T-cell (primary cell): ENCODE measurements at regions of chr2 and their contacts with region 1.

Region 1: DNA sequence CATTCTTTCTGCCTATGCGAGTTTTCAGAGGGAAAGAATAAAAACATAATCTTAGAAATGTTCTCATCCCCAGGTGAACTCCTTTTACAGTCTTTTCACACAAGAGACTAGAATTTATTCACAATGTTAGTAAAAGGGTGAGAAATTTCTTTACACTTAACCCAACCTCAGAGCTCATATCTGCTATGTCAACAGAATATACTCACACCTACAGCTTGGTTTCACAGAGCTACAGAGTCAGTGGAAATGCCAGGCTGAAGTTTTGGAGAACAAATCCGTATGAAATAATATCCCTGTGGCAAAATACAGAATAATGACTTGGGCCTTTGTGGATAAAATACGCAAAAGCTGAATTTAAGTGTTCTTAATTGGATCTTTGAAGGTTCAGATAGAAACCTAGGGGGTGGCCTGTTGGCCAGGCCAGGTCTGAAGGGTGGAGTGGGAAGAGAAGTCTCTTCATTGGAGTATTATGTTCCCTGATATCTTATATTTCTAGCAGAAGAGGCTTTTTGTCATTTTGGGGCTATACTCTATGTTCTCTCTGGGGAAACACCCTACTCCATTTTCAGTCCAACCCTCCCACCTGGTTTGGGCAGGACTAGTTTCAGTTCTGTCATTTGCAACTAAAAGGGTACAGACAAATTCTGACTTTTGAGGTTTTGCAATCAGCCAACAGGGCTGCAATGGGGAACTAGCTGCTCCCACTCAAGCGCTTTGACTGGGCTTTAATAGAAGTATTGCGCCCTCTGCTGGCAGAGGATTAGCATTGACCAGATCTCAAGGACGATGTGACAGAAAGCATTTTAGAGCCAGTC is 25.7 kb downstream of the FBXO48 start:
- DNase-seq: peak; percentile 47 to 95 (median 77)
- ATAC-seq: peak; percentile 92 to 97 (median 95)
- H3K4me3 ChIP-seq: no peak overlapping the region
- H3K4me3 Mint-ChIP-seq: no peak overlapping the region
- H3K27ac ChIP-seq: peak overlapping the region; percentile 67
- H3K27ac Mint-ChIP-seq: peak overlapping the region; percentile 71 to 87
- H3K4me1 ChIP-seq: peaks cover 0 to 12% of the 10 kb centered on the region in 2 experiments
- H3K4me1 Mint-ChIP-seq: peaks cover 0 to 24% (median 8%) of the 10 kb centered on the region in 3 donors
- H3K27me3 ChIP-seq: no peaks in the 10 kb centered on the region
- H3K27me3 Mint-ChIP-seq: no peaks in the 10 kb centered on the region

Region 2: DNA sequence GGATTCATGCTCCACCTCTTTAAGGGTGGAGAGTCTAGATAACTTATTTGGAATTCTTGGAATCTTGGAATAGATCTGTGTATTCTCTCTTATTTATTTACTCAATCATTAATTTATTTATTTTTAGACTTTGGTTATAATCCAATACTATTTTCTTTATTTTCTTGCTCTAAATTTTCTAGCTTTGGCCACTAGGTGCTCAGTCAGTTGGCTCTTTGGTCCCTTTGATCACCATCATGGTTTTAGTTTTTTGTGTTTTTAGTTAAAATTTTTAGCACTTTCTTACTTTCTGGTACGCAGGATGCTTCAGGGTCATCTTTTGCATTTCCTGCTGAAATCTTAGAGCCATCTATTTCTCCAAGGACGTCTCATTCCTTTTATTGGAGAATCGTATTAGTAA is 81.5 kb before region 1 on chr2:
- CTCF ChIA-PET with region 1: interaction called, 3 to 16 read pairs
- POLR2A ChIA-PET with region 1: no interaction called
- DNase-seq: no peak
- ATAC-seq: no peak
- H3K4me3 ChIP-seq: no peak overlapping the region
- H3K4me3 Mint-ChIP-seq: no peak overlapping the region
- H3K27ac ChIP-seq: no peak overlapping the region
- H3K27ac Mint-ChIP-seq: no peak overlapping the region
- H3K4me1 ChIP-seq: peaks cover 0 to 15% of the 10 kb centered on the region in 2 experiments
- H3K4me1 Mint-ChIP-seq: peaks cover 12 to 28% (median 13%) of the 10 kb centered on the region in 3 donors
- H3K27me3 ChIP-seq: no peaks in the 10 kb centered on the region
- H3K27me3 Mint-ChIP-seq: peaks cover 0 to 4% of the 10 kb centered on the region in 2 donors

Region 3: GRCh38 chr2:68411397-68412126 is 29.8 kb before region 1 on chr2:
- CTCF ChIA-PET with region 1: no interaction called
- POLR2A ChIA-PET with region 1: no interaction called
- DNase-seq: no peak
- ATAC-seq: no peak
- H3K4me3 ChIP-seq: no peak overlapping the region
- H3K4me3 Mint-ChIP-seq: peak overlapping the region in 1 of 3 donors; percentile 6
- H3K27ac ChIP-seq: peak overlapping the region; percentile 42
- H3K27ac Mint-ChIP-seq: peak overlapping the region in 1 of 2 donors; percentile 77
- H3K4me1 ChIP-seq: peaks cover 0 to 18% of the 10 kb centered on the region in 2 experiments
- H3K4me1 Mint-ChIP-seq: peaks cover 8 to 42% (median 13%) of the 10 kb centered on the region in 3 donors
- H3K27me3 ChIP-seq: no peaks in the 10 kb centered on the region
- H3K27me3 Mint-ChIP-seq: peaks cover 0 to 3% of the 10 kb centered on the region in 2 donors

Region 4: GRCh38 chr2:68429311-68429826 is 12.0 kb before region 1 on chr2:
- CTCF ChIA-PET with region 1: interaction called in 1 of 2 experiments, 15 read pairs
- POLR2A ChIA-PET with region 1: no interaction called
- DNase-seq: no peak
- ATAC-seq: no peak
- H3K4me3 ChIP-seq: no peak overlapping the region
- H3K4me3 Mint-ChIP-seq: no peak overlapping the region
- H3K27ac ChIP-seq: no peak overlapping the region
- H3K27ac Mint-ChIP-seq: no peak overlapping the region
- H3K4me1 ChIP-seq: peaks cover 0 to 37% of the 10 kb centered on the region in 2 experiments
- H3K4me1 Mint-ChIP-seq: peaks cover 0 to 25% (median 18%) of the 10 kb centered on the region in 3 donors
- H3K27me3 ChIP-seq: no peaks in the 10 kb centered on the region
- H3K27me3 Mint-ChIP-seq: no peaks in the 10 kb centered on the region

Region 5: DNA sequence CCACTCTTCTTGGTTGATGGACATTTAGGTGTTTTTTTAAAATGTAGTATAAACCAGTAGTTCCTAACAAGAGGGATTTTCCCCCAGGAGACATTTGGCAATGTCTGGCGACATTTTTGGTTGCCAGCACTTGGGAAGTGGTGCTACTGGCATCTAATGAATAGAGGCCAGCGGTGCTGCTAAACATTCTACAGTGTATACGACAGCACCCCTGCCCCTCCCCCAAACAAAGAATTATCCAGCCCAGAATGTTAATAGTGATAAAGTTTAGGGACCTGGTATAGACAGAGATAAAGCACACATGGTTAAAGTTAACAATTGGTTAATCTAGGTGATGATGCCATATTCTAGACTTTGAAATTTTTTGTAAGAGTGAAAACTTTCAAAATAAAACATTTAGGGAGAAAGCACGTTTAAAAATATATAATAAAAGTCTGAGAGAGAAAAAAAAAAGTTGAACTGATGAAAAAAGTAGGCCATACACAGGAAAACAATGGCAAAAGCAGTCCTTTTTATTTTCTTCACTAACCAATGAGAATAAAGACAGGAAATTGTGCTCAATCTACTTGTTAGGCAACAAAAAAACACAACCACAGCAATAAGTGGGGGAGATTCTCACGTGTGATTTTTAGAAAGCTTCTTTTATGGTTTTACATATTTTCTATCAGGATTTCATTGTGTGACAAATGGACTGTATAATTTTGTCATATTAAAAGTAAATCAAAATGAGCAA is 10.9 kb after region 1 on chr2:
- CTCF ChIA-PET with region 1: interaction called, 4 to 13 read pairs
- POLR2A ChIA-PET with region 1: no interaction called
- DNase-seq: peak in 1 of 35 experiments; percentile 52
- ATAC-seq: peak in 3 of 4 experiments; percentile 24 to 78 (median 55)
- H3K4me3 ChIP-seq: no peak overlapping the region
- H3K4me3 Mint-ChIP-seq: no peak overlapping the region
- H3K27ac ChIP-seq: peak overlapping the region; percentile 14
- H3K27ac Mint-ChIP-seq: peak overlapping the region; percentile 71 to 72
- H3K4me1 ChIP-seq: peaks cover 0 to 6% of the 10 kb centered on the region in 2 experiments
- H3K4me1 Mint-ChIP-seq: peaks cover 21 to 23% (median 22%) of the 10 kb centered on the region in 3 donors
- H3K27me3 ChIP-seq: no peaks in the 10 kb centered on the region
- H3K27me3 Mint-ChIP-seq: no peaks in the 10 kb centered on the region

Region 6: GRCh38 chr2:69272803-69273471 is 831.6 kb after region 1 on chr2:
- CTCF ChIA-PET with region 1: no interaction called
- POLR2A ChIA-PET with region 1: no interaction called
- DNase-seq: no peak
- ATAC-seq: no peak
- H3K4me3 ChIP-seq: no peak overlapping the region
- H3K4me3 Mint-ChIP-seq: no peak overlapping the region
- H3K27ac ChIP-seq: no peak overlapping the region
- H3K27ac Mint-ChIP-seq: no peak overlapping the region
- H3K4me1 ChIP-seq: no peaks in the 10 kb centered on the region
- H3K4me1 Mint-ChIP-seq: no peaks in the 10 kb centered on the region
- H3K27me3 ChIP-seq: peaks cover 0 to 8% of the 10 kb centered on the region in 2 experiments
- H3K27me3 Mint-ChIP-seq: peaks cover 41 to 53% of the 10 kb centered on the region in 2 donors